ENCODE measurements at regions of chr5 and their contacts with region 1.

Region 1: GRCh38 chr5:84343171-84343570 is 41.5 kb downstream of the EDIL3 start:
- DNase-seq: no peak
- ATAC-seq: no peak
- H3K4me3 ChIP-seq: no peak overlapping the region
- H3K27ac ChIP-seq: no peak overlapping the region
- H3K4me1 ChIP-seq: no peaks in the 10 kb centered on the region
- H3K27me3 ChIP-seq: no peaks in the 10 kb centered on the region
- CTCF ChIP-seq: no peak

Region 2: GRCh38 chr5:84474126-84474525 is 131.0 kb after region 1 on chr5:
- CTCF ChIA-PET with region 1: no interaction called
- POLR2A ChIA-PET with region 1: interaction called, 12 read pairs
- in situ Hi-C with region 1: no loop called
- intact Hi-C with region 1: no loop called
- DNase-seq: no peak
- ATAC-seq: no peak
- H3K4me3 ChIP-seq: no peak overlapping the region
- H3K27ac ChIP-seq: no peak overlapping the region
- H3K4me1 ChIP-seq: no peaks in the 10 kb centered on the region
- H3K27me3 ChIP-seq: no peaks in the 10 kb centered on the region
- CTCF ChIP-seq: no peak

Measured in Panc1 (cell line).